K562 (cell line): ENCODE measurements at regions of chr3 and their contacts with region 1.

Region 1: GRCh38 chr3:183560607-183561006 is 5.1 kb upstream of the KLHL6 start:
- DNase-seq: peak in 1 of 4 experiments; percentile 64
- ATAC-seq: peak; percentile 87
- H3K4me3 ChIP-seq: no peak overlapping the region
- H3K27ac ChIP-seq: no peak overlapping the region
- H3K4me1 ChIP-seq: peaks cover 5 to 12% of the 10 kb centered on the region in 2 experiments; a peak in 4 of 5 replicates
- H3K27me3 ChIP-seq: no peaks in the 10 kb centered on the region
- CTCF ChIP-seq: peak; percentile 53 to 73 (median 59); a peak in 5 of 6 replicates
- EP300 ChIP-seq: no peak
- POLR2A ChIP-seq: no peak
- RAD21 ChIP-seq: peak; percentile 89 to 91

Region 2: GRCh38 chr3:183188895-183189462 is 371.6 kb before region 1 on chr3:
- CTCF ChIA-PET with region 1: no interaction called
- POLR2A ChIA-PET with region 1: no interaction called
- in situ Hi-C with region 1: no loop called
- intact Hi-C with region 1: loop called (anchors 5 kb)
- DNase-seq: peak; percentile 38 to 72 (median 50)
- ATAC-seq: peak; percentile 94
- H3K4me3 ChIP-seq: no peak overlapping the region
- H3K27ac ChIP-seq: no peak overlapping the region
- H3K4me1 ChIP-seq: 0 out of 5 replicates have a peak, but pooled peaks cover 0 to 2% of the 10 kb centered on the region in 2 experiments
- H3K27me3 ChIP-seq: no peaks in the 10 kb centered on the region
- CTCF ChIP-seq: peak; percentile 69 to 74 (median 73)
- EP300 ChIP-seq: no peak
- POLR2A ChIP-seq: no peak
- RAD21 ChIP-seq: peak; percentile 37 to 61

Region 3: GRCh38 chr3:183468424-183468823 is 92.2 kb before region 1 on chr3:
- CTCF ChIA-PET with region 1: interaction called, 13 read pairs
- POLR2A ChIA-PET with region 1: no interaction called
- in situ Hi-C with region 1: no loop called
- intact Hi-C with region 1: loop called (anchors 1 kb)
- DNase-seq: no peak
- ATAC-seq: no peak
- H3K4me3 ChIP-seq: no peak overlapping the region
- H3K27ac ChIP-seq: no peak overlapping the region
- H3K4me1 ChIP-seq: no peaks in the 10 kb centered on the region
- H3K27me3 ChIP-seq: no peaks in the 10 kb centered on the region
- CTCF ChIP-seq: no peak
- EP300 ChIP-seq: no peak
- POLR2A ChIP-seq: no peak
- RAD21 ChIP-seq: no peak

Region 4: DNA sequence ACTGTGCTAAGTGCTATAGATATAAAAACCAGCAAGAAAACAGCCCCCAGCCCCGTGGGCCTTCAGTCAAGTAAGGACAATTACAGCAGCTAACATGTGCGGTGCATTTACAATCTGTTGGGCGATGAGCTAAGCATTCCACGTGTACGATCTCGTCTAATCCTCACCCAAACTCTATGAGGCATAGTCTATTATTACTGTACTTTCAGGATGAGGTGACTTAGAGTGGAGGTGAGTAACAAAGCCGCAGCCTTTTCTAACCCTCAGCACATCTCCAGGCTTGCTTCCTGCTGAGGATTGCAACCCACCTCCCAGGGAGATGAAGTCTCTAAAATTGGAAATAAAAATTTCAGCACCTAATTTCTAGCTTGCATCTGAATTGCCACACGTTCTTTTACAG is 79.0 kb before region 1 on chr3:
- CTCF ChIA-PET with region 1: interaction called, 4 read pairs
- POLR2A ChIA-PET with region 1: no interaction called
- in situ Hi-C with region 1: no loop called
- intact Hi-C with region 1: loop called (anchors 5 kb)
- DNase-seq: no peak
- ATAC-seq: no peak
- H3K4me3 ChIP-seq: no peak overlapping the region
- H3K27ac ChIP-seq: no peak overlapping the region
- H3K4me1 ChIP-seq: peaks cover 11 to 17% of the 10 kb centered on the region in 2 experiments
- H3K27me3 ChIP-seq: no peaks in the 10 kb centered on the region
- CTCF ChIP-seq: no peak
- EP300 ChIP-seq: no peak
- POLR2A ChIP-seq: no peak
- RAD21 ChIP-seq: no peak

Region 5: DNA sequence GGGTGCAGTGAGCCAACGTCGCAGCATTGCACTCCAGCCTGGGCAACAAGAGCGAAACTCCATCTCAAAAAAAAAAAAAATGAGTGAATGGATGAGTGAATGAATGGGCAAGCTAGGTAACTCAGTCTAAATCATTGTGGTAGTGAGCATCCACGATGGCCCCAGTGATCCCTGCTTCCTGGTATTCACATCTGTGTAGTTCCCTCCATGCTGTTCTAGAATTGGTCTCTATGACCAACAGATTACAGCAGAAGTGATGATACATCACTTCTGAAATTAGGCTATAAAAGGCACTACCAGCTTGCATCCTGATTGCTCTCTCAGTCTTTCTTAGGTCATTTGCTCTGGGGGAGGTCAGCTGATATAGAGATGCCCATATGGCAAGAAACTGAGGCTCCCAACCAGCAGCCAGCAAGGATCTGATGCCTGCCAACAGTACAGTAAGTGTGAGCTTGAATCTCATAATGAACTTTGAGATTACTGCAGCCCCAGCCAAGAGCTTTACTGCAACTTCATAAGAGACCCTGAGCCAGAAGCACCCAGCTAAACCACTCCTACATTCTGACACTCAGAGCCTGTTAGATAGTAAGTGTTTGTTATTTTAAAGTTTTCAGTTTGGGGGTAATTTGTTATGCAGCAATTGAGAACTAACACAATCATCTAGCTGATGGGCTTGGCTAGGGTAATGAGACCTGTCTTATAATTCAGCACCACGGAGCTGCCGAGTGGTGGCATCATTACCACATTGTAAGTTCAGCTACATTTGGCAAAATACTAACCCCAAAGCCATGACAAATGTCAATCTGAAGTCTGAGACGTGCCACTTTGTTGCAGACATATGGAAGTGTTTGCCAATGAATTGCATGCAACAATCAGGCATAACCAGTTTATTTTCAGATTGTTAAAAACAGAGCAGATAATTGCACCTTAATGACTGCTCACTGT is 58.1 kb before region 1 on chr3:
- CTCF ChIA-PET with region 1: interaction called, 6 read pairs
- POLR2A ChIA-PET with region 1: no interaction called
- in situ Hi-C with region 1: no loop called
- intact Hi-C with region 1: loop called (anchors 1 kb)
- DNase-seq: no peak
- ATAC-seq: peak; percentile 54
- H3K4me3 ChIP-seq: no peak overlapping the region
- H3K27ac ChIP-seq: no peak overlapping the region
- H3K4me1 ChIP-seq: peaks cover 0 to 8% of the 10 kb centered on the region in 2 experiments; a peak in 3 of 5 replicates
- H3K27me3 ChIP-seq: no peaks in the 10 kb centered on the region
- CTCF ChIP-seq: peak; percentile 14 to 48 (median 21); a peak in 2 of 6 replicates
- EP300 ChIP-seq: no peak
- POLR2A ChIP-seq: no peak
- RAD21 ChIP-seq: peak; percentile 21 to 39; a peak in 3 of 4 replicates

Region 6: DNA sequence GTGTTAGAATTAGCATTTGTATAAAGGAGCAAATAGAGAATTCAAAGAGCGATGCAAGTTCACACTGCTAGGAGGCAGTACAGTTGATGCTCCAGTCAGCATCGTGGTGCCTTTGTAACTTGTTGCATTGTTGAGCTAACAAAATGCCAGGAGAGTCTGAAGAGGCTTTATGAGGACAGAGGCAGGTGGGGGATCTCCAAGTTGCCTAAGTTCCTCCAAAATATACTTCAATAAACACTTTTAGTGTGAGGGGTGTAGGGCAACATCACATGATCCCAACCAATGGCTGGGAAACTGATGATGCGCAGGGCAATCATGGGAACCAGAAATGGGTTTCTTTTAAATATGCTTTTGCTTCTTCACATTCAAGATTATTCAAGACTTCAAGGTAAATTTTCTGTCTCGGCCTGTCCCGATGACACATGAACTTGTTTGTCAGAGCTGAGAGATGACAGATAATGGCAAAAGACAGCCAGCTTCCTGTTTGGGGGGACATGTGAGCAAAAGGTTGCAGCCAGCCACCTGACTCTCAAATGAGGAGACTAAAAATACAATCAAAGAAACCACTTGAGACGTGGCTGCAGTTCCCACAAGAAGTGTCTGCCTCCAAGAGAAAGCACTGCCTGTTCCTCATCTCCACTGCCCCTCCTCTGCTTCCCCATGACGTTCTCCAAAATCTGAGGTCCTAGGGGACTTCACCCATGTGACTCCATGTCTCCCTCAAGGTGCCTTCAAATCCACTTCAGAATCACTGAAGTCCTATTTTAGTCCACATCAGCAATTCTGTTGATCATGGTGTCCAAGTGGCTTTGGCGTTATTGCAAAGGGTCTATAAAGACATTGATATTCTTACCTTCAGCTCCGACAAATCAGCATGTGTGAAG is 44.4 kb before region 1 on chr3:
- CTCF ChIA-PET with region 1: no interaction called
- POLR2A ChIA-PET with region 1: no interaction called
- in situ Hi-C with region 1: no loop called
- intact Hi-C with region 1: loop called (anchors 5 kb)
- DNase-seq: no peak
- ATAC-seq: peak; percentile 37; the same call in 2 of the 3 replicates
- H3K4me3 ChIP-seq: no peak overlapping the region
- H3K27ac ChIP-seq: no peak overlapping the region
- H3K4me1 ChIP-seq: peaks cover 9 to 36% of the 10 kb centered on the region in 2 experiments; a peak in 4 of 5 replicates
- H3K27me3 ChIP-seq: no peaks in the 10 kb centered on the region; a peak in 1 of 5 replicates
- CTCF ChIP-seq: peak in 2 of 3 experiments; percentile 16 to 22; a peak in 1 of 6 replicates
- EP300 ChIP-seq: no peak
- POLR2A ChIP-seq: no peak
- RAD21 ChIP-seq: no peak

Region 7: DNA sequence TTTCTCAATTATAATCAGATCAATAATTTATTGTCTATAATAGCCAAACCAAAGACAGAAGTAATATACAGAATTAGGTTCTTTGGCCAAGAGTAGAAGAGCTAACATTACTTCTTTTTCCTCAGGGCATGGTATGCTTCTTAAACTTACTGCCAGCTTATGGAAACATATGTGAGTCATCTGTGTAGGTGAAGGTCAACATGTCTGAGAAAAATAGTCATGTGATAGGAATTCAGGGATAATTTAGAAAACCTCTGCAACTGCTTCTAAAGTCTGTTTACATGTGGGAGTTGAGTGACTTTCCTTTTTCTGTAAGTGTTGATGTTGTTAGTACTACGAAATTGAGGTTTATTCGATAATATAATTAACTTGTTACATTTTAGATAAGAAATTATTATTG is 284.0 kb after region 1 on chr3:
- CTCF ChIA-PET with region 1: no interaction called
- POLR2A ChIA-PET with region 1: no interaction called
- in situ Hi-C with region 1: no loop called
- intact Hi-C with region 1: no loop called
- DNase-seq: no peak
- ATAC-seq: no peak
- H3K4me3 ChIP-seq: no peak overlapping the region
- H3K27ac ChIP-seq: no peak overlapping the region
- H3K4me1 ChIP-seq: no peaks in the 10 kb centered on the region
- H3K27me3 ChIP-seq: no peaks in the 10 kb centered on the region
- CTCF ChIP-seq: no peak
- EP300 ChIP-seq: no peak
- POLR2A ChIP-seq: no peak
- RAD21 ChIP-seq: no peak